PC-9 (cell line): ENCODE measurements at regions of chr14 and their contacts with region 1.

Region 1: GRCh38 chr14:33754265-33754664 is 196.6 kb downstream of the EGLN3 start:
- DNase-seq: peak in 1 of 2 experiments; percentile 1
- H3K4me3 ChIP-seq: no peak overlapping the region
- H3K27ac ChIP-seq: no peak overlapping the region
- H3K4me1 ChIP-seq: no peaks in the 10 kb centered on the region
- H3K27me3 ChIP-seq: no peaks in the 10 kb centered on the region
- CTCF ChIP-seq: no peak

Region 2: DNA sequence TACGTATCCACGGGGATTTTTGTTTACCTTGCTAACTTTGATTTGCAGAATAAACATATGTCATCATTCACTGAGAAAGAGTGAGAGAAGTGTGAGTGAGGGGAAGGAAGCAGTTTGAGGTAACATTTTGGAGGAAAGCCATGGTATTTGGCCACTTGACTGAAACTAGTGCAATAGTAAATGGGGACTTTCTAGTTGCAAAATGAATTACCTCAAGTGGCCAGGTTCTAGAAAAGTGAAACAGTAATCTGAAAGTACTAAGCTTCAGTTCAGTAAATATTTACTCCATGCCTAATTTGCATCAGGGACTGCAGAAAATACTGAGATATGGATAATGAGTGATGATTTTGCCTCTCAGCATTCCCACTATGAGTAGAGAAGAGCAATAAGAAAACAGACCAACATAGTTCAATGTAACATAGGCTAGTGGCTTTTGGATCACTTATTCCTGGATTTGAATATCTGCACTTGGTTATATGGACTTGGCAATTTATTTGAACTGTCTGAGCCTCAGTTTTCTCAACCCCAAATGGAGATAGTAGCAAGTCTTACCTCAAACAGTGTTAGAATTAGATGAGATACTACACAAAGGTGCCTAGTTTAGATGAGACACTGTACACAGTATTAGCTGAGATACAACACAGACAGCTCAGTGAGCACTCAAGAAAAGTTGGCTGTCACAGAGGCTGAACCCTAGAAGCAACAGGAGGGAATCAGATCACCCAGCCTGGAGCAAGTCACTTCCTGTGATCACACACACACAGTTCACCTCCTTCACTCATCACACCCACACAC is 376.5 kb before region 1 on chr14:
- CTCF ChIA-PET with region 1: no interaction called
- POLR2A ChIA-PET with region 1: no interaction called
- intact Hi-C with region 1: no loop called
- DNase-seq: no peak
- H3K4me3 ChIP-seq: no peak overlapping the region
- H3K27ac ChIP-seq: no peak overlapping the region
- H3K4me1 ChIP-seq: no peaks in the 10 kb centered on the region
- H3K27me3 ChIP-seq: no peaks in the 10 kb centered on the region
- CTCF ChIP-seq: no peak

Region 3: GRCh38 chr14:33737446-33737845 is 16.8 kb before region 1 on chr14:
- CTCF ChIA-PET with region 1: no interaction called
- POLR2A ChIA-PET with region 1: interaction called, 10 read pairs
- intact Hi-C with region 1: no loop called
- DNase-seq: no peak
- H3K4me3 ChIP-seq: no peak overlapping the region
- H3K27ac ChIP-seq: no peak overlapping the region
- H3K4me1 ChIP-seq: no peaks in the 10 kb centered on the region
- H3K27me3 ChIP-seq: no peaks in the 10 kb centered on the region
- CTCF ChIP-seq: no peak